ENCODE measurements at regions of chr3 and their contacts with region 1.

Region 1: DNA sequence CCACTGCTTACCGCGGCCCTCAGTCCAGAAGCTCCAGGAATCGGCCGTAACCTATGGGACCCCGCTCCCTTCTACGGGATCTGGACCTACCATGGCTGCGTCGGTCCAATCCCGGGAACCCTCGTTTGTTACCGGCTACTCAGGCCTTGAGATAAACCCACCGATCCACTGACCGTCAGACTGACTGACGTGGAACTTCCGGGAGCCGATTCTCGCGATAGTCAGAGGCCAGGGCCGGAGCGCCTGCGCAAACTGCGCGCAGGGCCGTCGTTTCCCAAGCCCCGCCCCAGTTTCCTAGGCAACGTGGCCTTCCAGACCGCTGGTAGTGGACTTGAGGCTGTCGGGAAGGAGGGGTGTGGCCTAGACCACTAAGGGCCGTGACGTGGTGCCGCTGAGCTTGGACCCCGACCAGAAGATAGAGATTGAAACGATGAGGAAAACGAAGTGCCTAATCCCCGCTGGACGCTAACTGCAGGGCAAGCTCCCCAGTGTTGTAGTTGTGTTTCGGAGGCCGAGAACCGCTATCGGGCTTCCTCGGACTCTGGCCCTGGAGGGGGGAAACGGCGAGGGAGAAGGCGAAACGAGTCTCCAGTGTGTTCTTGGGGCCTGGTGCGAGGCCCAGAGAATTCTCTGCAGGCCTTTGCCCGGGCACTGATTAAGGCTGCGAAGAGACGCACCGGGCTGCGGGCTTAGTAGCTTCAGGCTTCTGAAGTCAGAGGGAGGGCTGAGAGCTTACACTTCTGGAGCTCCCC is at the start of gene COPB2:
- DNase-seq: peak; percentile 97
- H3K4me3 Mint-ChIP-seq: peak within 1 kb of the TSS; percentile 96
- H3K27ac Mint-ChIP-seq: peak within 1 kb of the TSS; percentile 84
- H3K4me1 Mint-ChIP-seq: peaks cover 35% of the 10 kb centered on the region
- H3K27me3 Mint-ChIP-seq: no peaks in the 10 kb centered on the region
- total RNA-seq, gene COPB2: 106 to 109 TPM

Region 2: GRCh38 chr3:139343895-139344856 is 45.5 kb before region 1 on chr3 and contains the start of gene MRPS22:
- CTCF ChIA-PET with region 1: interaction called, 3 read pairs
- POLR2A ChIA-PET with region 1: interaction called, 22 read pairs
- DNase-seq: peak; percentile 87
- H3K4me3 Mint-ChIP-seq: peak within 1 kb of the TSS; percentile 48
- H3K27ac Mint-ChIP-seq: no peak within 1 kb of the TSS
- H3K4me1 Mint-ChIP-seq: peaks cover 14% of the 10 kb centered on the region
- H3K27me3 Mint-ChIP-seq: peaks cover 3% of the 10 kb centered on the region
- total RNA-seq, gene MRPS22: 31.9 to 37.2 TPM

Region 3: DNA sequence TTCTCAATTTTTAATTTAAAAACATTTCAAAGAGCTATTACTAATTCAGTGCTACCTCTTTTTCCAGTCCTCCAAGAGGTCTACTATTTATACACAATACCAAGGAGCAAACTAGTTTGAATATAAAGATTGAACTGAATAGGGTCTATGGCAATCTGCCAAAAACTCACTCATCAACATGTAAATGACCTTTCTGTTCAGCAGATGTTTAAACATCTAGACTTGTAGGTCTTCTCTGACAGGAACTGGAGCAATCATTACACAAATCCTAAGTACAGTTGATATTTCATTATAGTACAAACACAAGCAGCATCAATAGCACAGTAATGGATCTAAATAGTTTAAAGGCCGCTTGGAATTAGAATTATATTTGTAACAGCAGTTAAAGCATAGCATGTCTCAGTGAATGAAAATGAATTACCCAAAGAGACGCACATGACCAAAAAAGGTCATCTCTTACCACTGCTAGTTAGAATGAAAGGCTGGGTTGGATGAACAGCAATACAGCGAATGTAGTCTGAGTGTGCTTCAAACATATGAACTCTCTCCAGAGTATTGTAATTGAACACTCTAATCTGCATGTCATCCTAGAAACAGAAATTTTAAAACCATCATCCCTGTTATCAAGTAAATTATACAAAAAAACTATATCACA is 10.9 kb before region 1 on chr3:
- CTCF ChIA-PET with region 1: interaction called, 5 read pairs
- POLR2A ChIA-PET with region 1: interaction called, 10 read pairs
- DNase-seq: no peak
- H3K4me3 Mint-ChIP-seq: no peak overlapping the region
- H3K27ac Mint-ChIP-seq: no peak overlapping the region
- H3K4me1 Mint-ChIP-seq: peaks cover 19% of the 10 kb centered on the region
- H3K27me3 Mint-ChIP-seq: no peaks in the 10 kb centered on the region

Region 4: GRCh38 chr3:140152851-140153639 is 763.4 kb after region 1 on chr3:
- CTCF ChIA-PET with region 1: no interaction called
- POLR2A ChIA-PET with region 1: no interaction called
- DNase-seq: no peak
- H3K4me3 Mint-ChIP-seq: no peak overlapping the region
- H3K27ac Mint-ChIP-seq: no peak overlapping the region
- H3K4me1 Mint-ChIP-seq: no peaks in the 10 kb centered on the region
- H3K27me3 Mint-ChIP-seq: no peaks in the 10 kb centered on the region

Measured in activated CD4-positive, alpha-beta memory T cell treated with anti-CD3 and anti-CD28 coated beads, Interleukin-2, amount 10 ng/mL, durations not matched to agents 7 days and 5 days (primary cell).